CD4-positive, alpha-beta T cell (primary cell): ENCODE measurements at regions of chr2 and their contacts with region 1.

Region 1: GRCh38 chr2:237744613-237745249 is 53.8 kb upstream of the RBM44 start:
- DNase-seq: peak; percentile 58 to 87 (median 78)
- ATAC-seq: peak; percentile 75
- H3K4me3 ChIP-seq: no peak overlapping the region
- H3K4me3 Mint-ChIP-seq: peak overlapping the region; percentile 43
- H3K27ac ChIP-seq: no peak overlapping the region
- H3K27ac Mint-ChIP-seq: peak overlapping the region; percentile 78
- H3K4me1 ChIP-seq: peaks cover 40% of the 10 kb centered on the region
- H3K4me1 Mint-ChIP-seq: peaks cover 50% of the 10 kb centered on the region
- H3K27me3 ChIP-seq: no peaks in the 10 kb centered on the region
- H3K27me3 Mint-ChIP-seq: no peaks in the 10 kb centered on the region
- CTCF ChIP-seq: peak; percentile 98

Region 2: GRCh38 chr2:237154082-237154638 is 590.6 kb before region 1 on chr2:
- CTCF ChIA-PET with region 1: no interaction called
- POLR2A ChIA-PET with region 1: no interaction called
- intact Hi-C with region 1: loop called in 1 of 2 experiments (anchors 1 kb)
- DNase-seq: peak; percentile 17 to 74 (median 40)
- ATAC-seq: peak; percentile 66
- H3K4me3 ChIP-seq: no peak overlapping the region
- H3K4me3 Mint-ChIP-seq: no peak overlapping the region
- H3K27ac ChIP-seq: no peak overlapping the region
- H3K27ac Mint-ChIP-seq: no peak overlapping the region
- H3K4me1 ChIP-seq: peaks cover 4% of the 10 kb centered on the region
- H3K4me1 Mint-ChIP-seq: no peaks in the 10 kb centered on the region
- H3K27me3 ChIP-seq: no peaks in the 10 kb centered on the region
- H3K27me3 Mint-ChIP-seq: no peaks in the 10 kb centered on the region
- CTCF ChIP-seq: peak; percentile 61

Region 3: DNA sequence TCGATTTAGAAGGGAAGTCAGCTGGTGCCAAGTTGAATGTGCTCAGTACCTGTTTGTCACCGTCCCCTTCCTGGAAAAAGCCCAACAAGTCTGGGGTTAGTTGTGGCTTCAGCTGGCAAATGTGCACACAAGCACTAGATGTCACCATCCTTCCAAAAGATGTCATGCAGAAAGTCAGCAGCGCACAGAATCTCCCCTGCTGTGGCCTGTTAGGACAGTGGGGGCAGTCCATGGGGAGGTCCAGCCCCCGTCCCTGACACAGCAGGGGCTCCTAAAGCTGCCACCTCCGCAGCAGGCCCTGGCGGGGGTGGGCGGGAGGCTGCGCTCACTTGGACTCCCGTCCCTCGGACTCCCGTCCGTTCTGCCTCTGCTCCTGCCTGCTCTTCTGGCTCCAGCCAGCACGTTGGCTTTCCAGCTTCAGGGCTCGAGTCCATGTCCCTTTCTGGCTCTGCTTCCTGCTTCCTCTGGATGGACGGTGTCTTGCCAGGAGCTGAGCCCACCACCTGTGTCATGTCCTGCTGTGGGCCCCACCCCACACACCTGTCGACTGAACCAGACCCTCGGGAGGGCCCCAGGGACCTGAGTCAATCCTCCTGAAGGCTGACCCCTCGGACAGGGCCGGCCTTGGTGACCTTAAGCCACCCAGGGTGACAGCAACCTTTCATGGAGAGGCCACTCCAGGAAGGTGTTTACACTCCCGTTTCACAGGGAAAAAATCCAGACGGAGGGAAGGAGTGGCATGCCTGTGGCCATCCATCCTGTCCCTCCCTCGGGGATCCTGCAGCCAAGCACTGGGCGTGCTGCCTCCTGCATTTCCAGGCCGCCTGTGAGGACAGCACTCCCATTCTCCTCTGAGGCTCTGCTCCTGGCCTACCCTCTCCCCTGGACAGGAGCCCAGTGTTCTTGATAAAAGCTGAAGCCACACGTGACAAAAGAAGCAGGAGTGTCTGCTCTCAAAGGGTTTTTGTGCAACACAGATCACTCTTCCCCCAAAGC is 162.7 kb before region 1 on chr2:
- CTCF ChIA-PET with region 1: interaction called, 10 read pairs
- POLR2A ChIA-PET with region 1: no interaction called
- intact Hi-C with region 1: loop called (anchors 1 kb)
- DNase-seq: peak in 11 of 14 experiments; percentile 18 to 73 (median 45)
- ATAC-seq: peak; percentile 94
- H3K4me3 ChIP-seq: no peak overlapping the region
- H3K4me3 Mint-ChIP-seq: no peak overlapping the region
- H3K27ac ChIP-seq: no peak overlapping the region
- H3K27ac Mint-ChIP-seq: no peak overlapping the region
- H3K4me1 ChIP-seq: peaks cover 7% of the 10 kb centered on the region
- H3K4me1 Mint-ChIP-seq: peaks cover 4% of the 10 kb centered on the region
- H3K27me3 ChIP-seq: no peaks in the 10 kb centered on the region
- H3K27me3 Mint-ChIP-seq: no peaks in the 10 kb centered on the region
- CTCF ChIP-seq: peak; percentile 38

Region 4: GRCh38 chr2:237691908-237692600 is 52.7 kb before region 1 on chr2:
- CTCF ChIA-PET with region 1: interaction called, 20 read pairs
- POLR2A ChIA-PET with region 1: interaction called, 6 read pairs
- intact Hi-C with region 1: loop called (anchors 2 kb)
- DNase-seq: peak; percentile 90 to 98 (median 95)
- ATAC-seq: peak; percentile 48
- H3K4me3 ChIP-seq: peak overlapping the region; percentile 90
- H3K4me3 Mint-ChIP-seq: peak overlapping the region; percentile 89
- H3K27ac ChIP-seq: peak overlapping the region; percentile 87 to 96
- H3K27ac Mint-ChIP-seq: peak overlapping the region; percentile 93
- H3K4me1 ChIP-seq: peaks cover 77% of the 10 kb centered on the region
- H3K4me1 Mint-ChIP-seq: peaks cover 74% of the 10 kb centered on the region
- H3K27me3 ChIP-seq: no peaks in the 10 kb centered on the region
- H3K27me3 Mint-ChIP-seq: no peaks in the 10 kb centered on the region
- CTCF ChIP-seq: no peak

Region 5: GRCh38 chr2:237731663-237732062 is 13.1 kb before region 1 on chr2:
- CTCF ChIA-PET with region 1: interaction called, 17 read pairs
- POLR2A ChIA-PET with region 1: no interaction called
- intact Hi-C with region 1: no loop called
- DNase-seq: peak in 3 of 14 experiments; percentile 35 to 54 (median 42)
- ATAC-seq: peak; percentile 54
- H3K4me3 ChIP-seq: no peak overlapping the region
- H3K4me3 Mint-ChIP-seq: peak overlapping the region; percentile 5
- H3K27ac ChIP-seq: no peak overlapping the region
- H3K27ac Mint-ChIP-seq: peak overlapping the region; percentile 61
- H3K4me1 ChIP-seq: peaks cover 54% of the 10 kb centered on the region
- H3K4me1 Mint-ChIP-seq: peaks cover 69% of the 10 kb centered on the region
- H3K27me3 ChIP-seq: no peaks in the 10 kb centered on the region
- H3K27me3 Mint-ChIP-seq: no peaks in the 10 kb centered on the region
- CTCF ChIP-seq: no peak